Heart left ventricle (tissue), 16 donors: ENCODE measurements at regions of chr4 and their contacts with region 1.

Region 1: DNA sequence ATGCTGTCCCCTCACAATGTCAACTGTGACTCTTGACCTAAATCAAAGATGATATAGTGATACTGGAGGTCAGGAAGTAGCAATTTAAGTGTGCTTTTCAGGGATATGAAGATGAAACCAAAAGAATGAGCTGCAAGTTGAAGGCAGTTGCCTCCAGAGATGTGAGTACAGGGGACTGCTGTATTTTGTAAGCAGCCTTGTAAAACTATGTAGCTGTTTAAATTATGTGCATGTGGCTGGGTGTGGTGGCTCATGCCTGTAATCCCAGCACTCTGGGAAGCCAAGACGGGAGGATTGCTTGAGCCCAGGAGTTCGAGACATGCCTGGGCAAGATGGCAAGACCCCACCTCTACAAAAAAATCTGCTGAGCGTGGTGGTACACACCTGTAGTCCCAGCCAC is 15.1 kb upstream of the TNIP2 start:
- DNase-seq: no peak
- ATAC-seq: no peak
- H3K4me3 ChIP-seq: no peak overlapping the region
- H3K27ac ChIP-seq: peak overlapping the region in 1 of 12 donors; percentile 64
- H3K4me1 ChIP-seq: peaks cover 0 to 31% (median 6%) of the 10 kb centered on the region in 12 donors
- H3K27me3 ChIP-seq: no peaks in the 10 kb centered on the region
- CTCF ChIP-seq: no peak
- POLR2A ChIP-seq: no peak

Region 2: DNA sequence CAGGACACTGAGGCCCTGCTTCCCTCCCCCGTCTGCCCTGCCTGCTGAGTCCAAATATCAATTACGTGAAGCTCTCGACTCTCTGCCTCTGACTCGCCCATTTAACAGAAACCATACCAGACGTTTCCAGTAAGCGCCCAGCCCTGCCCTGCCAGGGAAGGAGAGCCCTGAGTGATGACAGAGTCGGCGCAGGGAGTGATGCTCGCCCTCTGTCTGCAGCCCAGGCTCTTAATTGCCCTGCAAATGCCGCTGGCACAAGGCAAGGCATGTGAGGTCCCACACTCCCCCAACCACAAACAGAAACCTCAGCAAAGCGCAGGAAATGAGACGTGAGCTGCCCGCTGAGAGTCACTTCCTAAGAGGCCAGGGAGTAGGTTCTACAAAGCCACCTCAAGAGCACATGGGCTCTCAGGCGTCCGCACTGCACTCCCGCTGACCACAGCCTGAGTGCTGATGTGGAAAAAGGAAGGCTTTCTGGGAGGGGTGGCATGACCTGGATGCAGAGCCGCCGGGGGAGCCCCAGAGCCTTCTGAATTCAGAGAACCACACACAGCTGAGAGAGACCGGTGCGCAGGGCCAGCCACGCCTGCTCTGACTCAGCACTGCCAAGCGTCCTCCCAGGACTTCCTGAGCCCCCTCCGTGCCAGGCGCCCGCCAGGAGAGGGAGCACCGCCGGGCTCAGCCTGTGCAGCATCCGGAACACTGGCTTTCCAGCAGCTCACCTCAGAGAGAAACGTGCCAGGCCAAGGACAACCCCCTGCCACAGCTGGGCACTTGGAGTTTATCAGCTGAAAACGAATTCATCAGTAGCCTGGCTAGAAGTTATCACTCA is 358.2 kb before region 1 on chr4:
- intact Hi-C with region 1: no loop called
- DNase-seq: peak; percentile 75 to 88 (median 83)
- ATAC-seq: peak; percentile 91 to 95 (median 92)
- H3K4me3 ChIP-seq: peak overlapping the region in 9 of 12 donors; percentile 18 to 45 (median 27)
- H3K27ac ChIP-seq: peak overlapping the region in 11 of 12 donors; percentile 30 to 92 (median 59)
- H3K4me1 ChIP-seq: peaks cover 0 to 61% (median 32%) of the 10 kb centered on the region in 12 donors
- H3K27me3 ChIP-seq: peaks cover 0 to 20% (median 0%) of the 10 kb centered on the region in 9 donors
- CTCF ChIP-seq: peak in 11 of 12 donors; percentile 23 to 58 (median 34)
- POLR2A ChIP-seq: peak in 1 of 2 donors; percentile 31

Region 3: DNA sequence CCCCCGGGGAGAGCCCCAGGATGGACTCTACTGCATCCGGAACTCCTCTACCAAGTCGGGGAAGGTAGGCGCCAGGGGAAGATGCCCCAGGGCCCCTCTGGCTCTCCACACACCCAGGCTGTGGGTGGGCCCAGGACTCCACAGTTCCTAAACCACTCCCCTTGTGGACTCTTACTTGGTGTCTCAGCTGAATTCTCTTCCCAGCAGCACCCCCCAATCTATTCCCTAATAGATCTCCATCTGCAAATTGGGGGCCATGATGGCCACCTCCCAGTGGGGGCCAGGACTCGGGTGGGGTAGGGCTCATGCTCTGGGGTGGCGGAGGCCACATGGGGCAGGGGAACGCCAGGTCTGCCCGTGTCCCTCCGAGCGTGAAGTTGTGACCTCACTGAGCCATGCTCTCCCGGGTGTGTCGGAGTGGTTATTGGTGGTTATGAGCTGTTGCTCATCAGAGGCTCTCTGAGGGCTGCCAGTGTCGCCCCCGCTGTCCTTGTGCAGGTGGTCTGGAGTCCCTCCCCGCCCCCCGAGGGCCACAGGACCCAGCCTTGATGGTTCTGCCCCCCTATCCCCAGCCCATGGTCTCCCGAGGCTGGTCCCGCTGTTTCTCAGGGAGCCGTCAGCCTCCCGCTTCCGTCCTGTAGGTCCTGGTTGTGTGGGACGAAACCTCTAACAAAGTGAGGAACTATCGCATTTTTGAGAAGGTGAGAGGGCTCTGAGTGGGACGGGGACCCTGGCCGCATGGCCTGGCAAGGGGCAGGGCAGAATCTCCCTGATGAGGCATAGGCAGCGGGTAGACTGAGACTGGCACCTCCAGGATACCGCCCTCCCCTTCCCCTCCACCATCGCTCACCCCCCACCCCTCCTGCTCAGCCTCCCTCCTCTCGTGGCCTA is 61.3 kb after region 1 on chr4:
- intact Hi-C with region 1: loop called in 1 of 10 experiments (anchors 5 kb)
- DNase-seq: peak in 4 of 5 donors; percentile 9 to 54 (median 16)
- ATAC-seq: no peak
- H3K4me3 ChIP-seq: no peak overlapping the region
- H3K27ac ChIP-seq: no peak overlapping the region
- H3K4me1 ChIP-seq: peaks cover 0 to 38% (median 7%) of the 10 kb centered on the region in 12 donors
- H3K27me3 ChIP-seq: no peaks in the 10 kb centered on the region
- CTCF ChIP-seq: no peak
- POLR2A ChIP-seq: no peak

Region 4: DNA sequence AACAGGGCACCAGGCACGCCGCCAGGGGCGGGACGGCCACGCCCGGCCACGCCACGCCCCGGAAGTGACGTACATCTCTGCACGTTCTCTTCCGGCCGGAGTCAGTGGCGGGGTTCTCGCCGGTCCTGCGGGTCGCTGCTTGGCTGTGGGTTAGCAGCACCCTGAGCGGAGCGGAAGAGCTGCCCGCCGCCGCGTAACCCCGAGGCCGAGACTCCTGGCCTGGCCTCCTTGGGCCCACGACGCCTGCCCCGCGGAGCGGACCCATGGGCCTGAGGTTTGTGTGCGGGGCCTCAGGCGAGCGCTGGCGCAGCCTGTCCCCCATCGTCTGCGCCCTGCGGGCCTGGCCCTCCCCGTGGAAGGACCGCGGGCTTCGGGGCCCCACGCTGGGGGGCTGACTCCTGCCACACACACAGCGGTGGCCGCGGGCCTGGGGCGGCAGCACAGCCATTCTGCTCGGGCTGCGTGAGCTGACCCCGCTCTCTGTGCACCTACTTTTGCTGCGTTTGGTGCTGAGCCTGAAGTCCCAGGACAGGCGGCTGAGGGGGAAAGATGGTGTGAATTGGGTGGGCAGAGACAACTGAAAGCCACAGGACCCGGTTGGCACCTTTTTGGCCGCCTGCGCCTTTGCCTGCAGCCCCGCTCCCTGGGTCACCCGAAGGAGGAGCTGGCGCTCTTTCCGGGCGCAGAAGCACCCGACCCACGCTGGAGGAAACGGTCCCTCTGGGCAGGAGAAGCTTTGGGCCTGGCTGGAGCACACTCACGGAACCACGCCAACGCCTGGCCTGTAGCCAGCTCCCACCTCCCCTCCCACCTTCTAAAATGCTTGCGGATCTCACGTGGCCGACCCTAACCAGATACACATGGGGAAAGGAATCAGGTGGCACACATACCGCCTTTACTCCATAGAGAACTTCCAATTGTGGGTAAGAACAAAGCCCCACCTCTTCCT is 163.8 kb after region 1 on chr4:
- intact Hi-C with region 1: loop called in 5 of 10 experiments (anchors 5 to 10 kb)
- DNase-seq: peak; percentile 94 to 98 (median 96)
- ATAC-seq: peak; percentile 54 to 84 (median 83)
- H3K4me3 ChIP-seq: peak overlapping the region; percentile 76 to 100 (median 89)
- H3K27ac ChIP-seq: peak overlapping the region; percentile 68 to 96 (median 88)
- H3K4me1 ChIP-seq: peaks cover 2 to 63% (median 42%) of the 10 kb centered on the region in 12 donors
- H3K27me3 ChIP-seq: no peaks in the 10 kb centered on the region
- CTCF ChIP-seq: peak in 2 of 12 donors; percentile 1 to 26
- POLR2A ChIP-seq: peak; percentile 24 to 92

Region 5: GRCh38 chr4:3342182-3342854 is 571.1 kb after region 1 on chr4:
- intact Hi-C with region 1: no loop called
- DNase-seq: peak in 1 of 5 donors; percentile 6
- ATAC-seq: no peak
- H3K4me3 ChIP-seq: no peak overlapping the region
- H3K27ac ChIP-seq: no peak overlapping the region
- H3K4me1 ChIP-seq: peaks cover 0 to 19% (median 6%) of the 10 kb centered on the region in 12 donors
- H3K27me3 ChIP-seq: no peaks in the 10 kb centered on the region
- CTCF ChIP-seq: no peak
- POLR2A ChIP-seq: no peak